Mammary epithelial cell (primary cell): ENCODE measurements at regions of chr5 and their contacts with region 1.

Region 1: DNA sequence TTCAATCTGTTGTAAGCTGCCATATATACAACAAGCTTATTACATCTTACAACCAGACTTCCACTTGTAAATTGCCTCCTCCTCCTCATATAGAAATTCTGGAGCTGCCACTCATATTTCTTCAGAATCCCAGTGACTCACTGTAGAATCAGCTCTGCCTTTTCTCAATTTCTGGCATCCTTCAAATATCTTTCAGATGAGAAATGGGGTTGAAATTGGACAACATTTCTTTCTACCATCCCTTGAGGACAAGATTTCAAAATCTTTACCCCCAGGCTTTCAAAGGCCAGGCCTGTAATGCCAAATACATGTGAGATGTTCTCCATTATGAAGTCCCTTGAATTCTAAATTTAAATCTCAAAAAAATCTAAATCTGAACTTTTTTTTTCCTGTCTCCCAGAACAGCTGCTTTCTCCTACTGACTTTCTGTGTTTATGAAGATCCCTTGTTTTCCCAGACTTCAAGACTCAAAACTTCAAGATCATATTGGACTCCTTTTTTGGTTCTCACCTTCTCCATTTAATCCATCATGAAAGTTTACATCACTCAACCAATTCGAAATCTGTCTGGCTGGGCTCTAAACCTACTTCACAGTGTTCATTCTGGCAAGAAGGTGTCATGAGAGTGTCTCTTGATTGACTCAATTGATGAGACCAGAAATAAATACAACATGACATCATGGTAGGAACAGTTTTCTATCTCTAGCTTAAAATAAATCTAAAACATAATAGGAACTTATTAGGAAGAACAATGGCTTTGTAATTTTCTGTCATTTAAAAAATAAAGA is 109.8 kb downstream of the HMHB1 start:
- DNase-seq: peak; percentile 83
- H3K4me3 ChIP-seq: no peak overlapping the region
- H3K27ac ChIP-seq: peak overlapping the region; percentile 87
- H3K4me1 ChIP-seq: peaks cover 36% of the 10 kb centered on the region
- H3K27me3 ChIP-seq: no peaks in the 10 kb centered on the region
- CTCF ChIP-seq: no peak

Region 2: DNA sequence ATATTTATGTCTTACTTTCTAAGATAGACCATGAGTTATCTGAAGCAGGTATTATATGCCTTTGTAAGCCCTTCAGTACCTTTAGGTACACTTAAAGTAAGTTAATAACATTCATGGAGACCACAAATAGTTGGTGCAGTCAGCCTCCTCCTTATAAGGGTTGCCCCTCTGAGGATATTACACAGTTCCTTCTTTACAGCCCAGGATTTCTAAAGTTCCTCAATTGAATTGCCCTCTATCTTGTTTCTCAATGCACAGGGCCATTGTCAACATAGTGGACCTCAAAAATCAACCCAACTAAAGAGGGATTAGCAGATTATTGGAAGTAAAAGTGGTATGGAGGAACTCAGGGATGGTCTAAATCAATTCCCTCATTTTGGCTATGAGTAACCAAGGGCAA is 59.4 kb before region 1 on chr5:
- CTCF ChIA-PET with region 1: no interaction called
- dilution Hi-C with region 1: no loop called
- in situ Hi-C with region 1: no loop called
- intact Hi-C with region 1: loop called (anchors 2 kb)
- DNase-seq: no peak
- H3K4me3 ChIP-seq: no peak overlapping the region
- H3K27ac ChIP-seq: no peak overlapping the region
- H3K4me1 ChIP-seq: no peaks in the 10 kb centered on the region
- H3K27me3 ChIP-seq: no peaks in the 10 kb centered on the region
- CTCF ChIP-seq: no peak